MCF 10A (cell line): ENCODE measurements at regions of chr1 and their contacts with region 1.

Region 1: GRCh38 chr1:153040950-153041631 is at the start of gene SPRR2D:
- DNase-seq: peak; percentile 54
- H3K4me3 Mint-ChIP-seq: peak within 1 kb of the TSS; percentile 37
- H3K27ac Mint-ChIP-seq: peak within 1 kb of the TSS; percentile 89
- H3K4me1 Mint-ChIP-seq: peaks cover 30% of the 10 kb centered on the region
- H3K27me3 Mint-ChIP-seq: no peaks in the 10 kb centered on the region
- CTCF ChIP-seq: no peak
- total RNA-seq, gene SPRR2D: 430 and 1,071 TPM in 2 replicates

Region 2: DNA sequence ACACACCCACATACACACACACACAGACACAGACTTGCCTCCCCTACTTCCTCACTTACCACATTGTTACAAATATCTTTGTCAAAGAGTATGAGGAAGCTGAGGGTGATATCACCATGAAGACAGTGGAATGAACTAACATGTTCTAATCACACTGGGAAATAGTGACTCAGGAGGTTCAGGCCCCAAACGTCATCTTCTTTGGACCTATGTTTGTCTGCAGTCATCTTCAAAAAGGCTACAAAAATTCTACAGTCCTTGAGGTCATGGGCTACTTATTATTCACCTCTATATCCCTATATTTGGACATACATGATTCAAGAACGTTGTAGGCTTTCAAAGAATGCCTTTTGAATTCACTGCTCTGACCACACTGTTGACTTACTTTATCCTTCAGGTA is 368.1 kb before region 1 on chr1:
- CTCF ChIA-PET with region 1: no interaction called
- POLR2A ChIA-PET with region 1: no interaction called
- intact Hi-C with region 1: no loop called
- DNase-seq: no peak
- H3K4me3 Mint-ChIP-seq: no peak overlapping the region
- H3K27ac Mint-ChIP-seq: no peak overlapping the region
- H3K4me1 Mint-ChIP-seq: no peaks in the 10 kb centered on the region
- H3K27me3 Mint-ChIP-seq: peaks cover 11% of the 10 kb centered on the region
- CTCF ChIP-seq: no peak

Region 3: GRCh38 chr1:153100236-153100635 is 59.1 kb after region 1 on chr1:
- CTCF ChIA-PET with region 1: no interaction called
- POLR2A ChIA-PET with region 1: interaction called, 6 read pairs
- intact Hi-C with region 1: loop called (anchors 1 kb)
- DNase-seq: peak; percentile 97
- H3K4me3 Mint-ChIP-seq: no peak overlapping the region
- H3K27ac Mint-ChIP-seq: peak overlapping the region; percentile 82
- H3K4me1 Mint-ChIP-seq: peaks cover 33% of the 10 kb centered on the region
- H3K27me3 Mint-ChIP-seq: no peaks in the 10 kb centered on the region
- CTCF ChIP-seq: no peak